Thyroid gland (tissue), 4 donors: ENCODE measurements at regions of chrX and their contacts with region 1.

Region 1: GRCh38 chrX:50747471-50747900 is 66.5 kb downstream of the SHROOM4 start:
- DNase-seq: peak in 1 of 2 donors; percentile 11
- H3K4me3 ChIP-seq: no peak overlapping the region
- H3K27ac ChIP-seq: no peak overlapping the region
- H3K4me1 ChIP-seq: no peaks in the 10 kb centered on the region
- H3K27me3 ChIP-seq: no peaks in the 10 kb centered on the region
- CTCF ChIP-seq: peak in 5 of 6 experiments; percentile 25 to 61 (median 48)
- POLR2A ChIP-seq: no peak

Region 2: DNA sequence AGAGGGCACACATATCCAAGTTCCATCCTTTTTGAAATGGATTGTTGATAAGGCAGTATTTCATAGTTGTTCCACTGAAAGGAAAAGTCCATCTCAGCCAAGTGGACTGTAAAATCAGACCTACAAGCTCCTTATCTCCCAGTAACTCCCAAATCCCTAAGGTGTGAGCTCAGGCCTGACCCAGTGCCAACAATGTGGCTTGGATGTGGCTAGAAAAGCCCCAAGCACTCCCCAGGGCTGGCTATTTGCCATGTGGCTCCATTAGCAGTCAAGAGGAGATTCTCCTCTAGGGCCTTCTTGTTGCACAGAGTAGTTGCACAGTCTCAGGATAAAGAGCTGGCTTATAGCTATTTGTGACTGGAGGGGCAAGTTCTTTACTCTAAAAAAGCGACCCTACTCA is 251.9 kb before region 1 on chrX:
- intact Hi-C with region 1: no loop called
- DNase-seq: peak; percentile 26 to 42
- H3K4me3 ChIP-seq: no peak overlapping the region
- H3K27ac ChIP-seq: no peak overlapping the region
- H3K4me1 ChIP-seq: no peaks in the 10 kb centered on the region
- H3K27me3 ChIP-seq: no peaks in the 10 kb centered on the region
- CTCF ChIP-seq: no peak
- POLR2A ChIP-seq: no peak

Region 3: GRCh38 chrX:50618788-50619558 is 128.5 kb before region 1 on chrX:
- intact Hi-C with region 1: no loop called
- DNase-seq: no peak
- H3K4me3 ChIP-seq: no peak overlapping the region
- H3K27ac ChIP-seq: no peak overlapping the region
- H3K4me1 ChIP-seq: no peaks in the 10 kb centered on the region
- H3K27me3 ChIP-seq: no peaks in the 10 kb centered on the region
- CTCF ChIP-seq: no peak
- POLR2A ChIP-seq: no peak

Region 4: DNA sequence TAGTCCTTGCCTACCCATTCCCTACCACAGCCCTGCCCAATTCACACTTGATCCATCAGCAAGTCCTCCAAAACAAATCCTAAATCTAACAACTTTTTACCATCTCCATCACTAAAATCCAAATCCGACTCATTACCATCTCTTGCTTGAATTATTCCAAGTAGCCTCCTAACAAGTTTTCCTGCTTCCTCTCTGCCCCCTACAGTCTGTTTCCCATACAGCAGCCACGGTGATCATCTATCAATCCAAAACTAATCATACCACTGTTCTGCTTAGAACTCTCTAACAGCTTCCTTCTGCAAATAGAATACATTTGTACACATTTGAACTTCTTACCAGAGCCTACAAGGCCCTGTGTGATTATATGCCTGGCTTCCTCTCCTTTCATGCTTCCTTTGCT is 66.5 kb before region 1 on chrX:
- intact Hi-C with region 1: no loop called
- DNase-seq: no peak
- H3K4me3 ChIP-seq: no peak overlapping the region
- H3K27ac ChIP-seq: no peak overlapping the region
- H3K4me1 ChIP-seq: no peaks in the 10 kb centered on the region
- H3K27me3 ChIP-seq: no peaks in the 10 kb centered on the region
- CTCF ChIP-seq: peak in 2 of 6 experiments; percentile 17 to 24
- POLR2A ChIP-seq: no peak

Region 5: GRCh38 chrX:50905334-50905733 is 157.8 kb after region 1 on chrX:
- intact Hi-C with region 1: loop called (anchors 5 kb)
- DNase-seq: no peak
- H3K4me3 ChIP-seq: no peak overlapping the region
- H3K27ac ChIP-seq: no peak overlapping the region
- H3K4me1 ChIP-seq: no peaks in the 10 kb centered on the region
- H3K27me3 ChIP-seq: no peaks in the 10 kb centered on the region
- CTCF ChIP-seq: no peak
- POLR2A ChIP-seq: no peak

Region 6: GRCh38 chrX:50920132-50920531 is 172.6 kb after region 1 on chrX:
- intact Hi-C with region 1: loop called (anchors 5 kb)
- DNase-seq: no peak
- H3K4me3 ChIP-seq: no peak overlapping the region
- H3K27ac ChIP-seq: no peak overlapping the region
- H3K4me1 ChIP-seq: no peaks in the 10 kb centered on the region
- H3K27me3 ChIP-seq: no peaks in the 10 kb centered on the region
- CTCF ChIP-seq: peak in 3 of 6 experiments; percentile 18 to 37 (median 22)
- POLR2A ChIP-seq: no peak

Region 7: DNA sequence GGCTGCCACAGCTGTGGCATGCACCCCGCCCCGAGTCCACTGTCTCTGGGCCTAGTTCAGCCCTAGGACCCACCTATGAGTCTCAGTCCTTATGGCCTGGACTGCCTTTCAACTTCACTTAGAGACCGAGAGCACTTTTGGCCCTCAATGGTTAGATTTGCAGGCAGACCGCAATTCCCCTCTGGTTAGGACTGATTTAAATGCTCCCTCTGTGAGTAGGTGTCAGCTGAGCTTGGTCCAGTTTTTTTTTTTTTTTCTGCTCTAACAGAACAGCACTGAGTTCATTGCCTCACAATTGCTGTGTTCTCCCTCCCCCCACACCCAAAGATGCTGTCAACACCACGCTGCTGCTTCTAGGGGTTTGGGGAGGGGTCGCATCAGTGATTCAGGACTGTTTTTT is 306.3 kb after region 1 on chrX:
- intact Hi-C with region 1: no loop called
- DNase-seq: no peak
- H3K4me3 ChIP-seq: no peak overlapping the region
- H3K27ac ChIP-seq: no peak overlapping the region
- H3K4me1 ChIP-seq: no peaks in the 10 kb centered on the region
- H3K27me3 ChIP-seq: no peaks in the 10 kb centered on the region
- CTCF ChIP-seq: no peak
- POLR2A ChIP-seq: no peak